ENCODE measurements at regions of chr1 and their contacts with region 1.

Region 1: DNA sequence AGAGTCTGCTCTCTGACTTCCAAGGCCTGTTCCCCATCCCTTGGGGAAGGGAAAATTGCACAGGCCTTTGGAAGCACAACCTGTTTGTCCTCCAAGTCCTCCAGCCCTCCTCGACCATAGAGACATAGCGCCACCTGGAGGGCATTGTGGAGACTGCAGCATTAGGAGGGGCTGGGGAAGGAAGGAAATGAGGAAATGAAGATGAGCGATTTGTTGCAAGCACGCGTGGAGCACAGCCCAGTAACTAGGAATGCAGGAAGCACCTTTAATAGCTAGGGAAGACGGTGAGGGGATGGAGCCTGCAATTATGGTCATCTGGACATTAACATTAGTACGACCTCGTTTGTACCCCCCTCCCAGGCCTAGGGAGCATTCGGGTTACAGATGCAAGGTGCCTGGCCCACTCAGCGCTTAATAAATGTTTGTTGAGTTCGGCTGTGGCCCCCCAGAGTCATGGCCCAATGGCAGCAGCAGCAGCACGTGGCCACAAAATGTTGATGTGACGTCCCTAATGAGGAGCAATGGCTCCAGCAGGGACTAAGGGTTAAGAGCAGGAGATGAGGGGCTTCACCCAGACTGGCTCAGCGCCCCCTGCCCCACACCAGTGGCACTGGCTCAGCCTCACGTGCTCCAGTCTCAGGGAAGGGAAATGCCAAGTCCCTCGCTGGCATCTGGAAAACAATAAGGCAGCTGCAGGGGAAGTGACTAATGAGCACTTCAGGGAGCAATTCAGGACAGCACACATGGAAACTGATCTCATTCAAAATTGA is 8.0 kb upstream of the CAMK2N1 start:
- DNase-seq: peak; percentile 98
- H3K4me3 ChIP-seq: peak overlapping the region in 1 of 3 experiments; percentile 13
- H3K27ac ChIP-seq: peak overlapping the region; percentile 90
- H3K4me1 ChIP-seq: peaks cover 23% of the 10 kb centered on the region
- H3K27me3 ChIP-seq: no peaks in the 10 kb centered on the region
- CTCF ChIP-seq: peak; percentile 89 to 96
- POLR2A ChIP-seq: no peak

Region 2: GRCh38 chr1:19762175-19762779 is 731.7 kb before region 1 on chr1:
- CTCF ChIA-PET with region 1: no interaction called
- POLR2A ChIA-PET with region 1: no interaction called
- dilution Hi-C with region 1: no loop called
- intact Hi-C with region 1: loop called (anchors 1 kb)
- DNase-seq: peak; percentile 50
- H3K4me3 ChIP-seq: no peak overlapping the region
- H3K27ac ChIP-seq: no peak overlapping the region
- H3K4me1 ChIP-seq: peaks cover 20% of the 10 kb centered on the region
- H3K27me3 ChIP-seq: no peaks in the 10 kb centered on the region
- CTCF ChIP-seq: peak; percentile 83 to 86
- POLR2A ChIP-seq: no peak

Region 3: GRCh38 chr1:19974822-19975416 is 519.1 kb before region 1 on chr1:
- CTCF ChIA-PET with region 1: interaction called, 11 read pairs
- POLR2A ChIA-PET with region 1: no interaction called
- dilution Hi-C with region 1: no loop called
- intact Hi-C with region 1: no loop called
- DNase-seq: peak; percentile 69
- H3K4me3 ChIP-seq: no peak overlapping the region
- H3K27ac ChIP-seq: no peak overlapping the region
- H3K4me1 ChIP-seq: no peaks in the 10 kb centered on the region
- H3K27me3 ChIP-seq: peaks cover 0 to 2% of the 10 kb centered on the region in 2 experiments
- CTCF ChIP-seq: peak; percentile 64 to 69
- POLR2A ChIP-seq: no peak

Region 4: GRCh38 chr1:20165522-20165951 is 328.5 kb before region 1 on chr1:
- CTCF ChIA-PET with region 1: interaction called, 6 read pairs
- POLR2A ChIA-PET with region 1: no interaction called
- dilution Hi-C with region 1: no loop called
- intact Hi-C with region 1: loop called (anchors 1 kb)
- DNase-seq: no peak
- H3K4me3 ChIP-seq: no peak overlapping the region
- H3K27ac ChIP-seq: no peak overlapping the region
- H3K4me1 ChIP-seq: no peaks in the 10 kb centered on the region
- H3K27me3 ChIP-seq: no peaks in the 10 kb centered on the region
- CTCF ChIP-seq: peak in 1 of 2 donors; percentile 11
- POLR2A ChIP-seq: no peak

Region 5: DNA sequence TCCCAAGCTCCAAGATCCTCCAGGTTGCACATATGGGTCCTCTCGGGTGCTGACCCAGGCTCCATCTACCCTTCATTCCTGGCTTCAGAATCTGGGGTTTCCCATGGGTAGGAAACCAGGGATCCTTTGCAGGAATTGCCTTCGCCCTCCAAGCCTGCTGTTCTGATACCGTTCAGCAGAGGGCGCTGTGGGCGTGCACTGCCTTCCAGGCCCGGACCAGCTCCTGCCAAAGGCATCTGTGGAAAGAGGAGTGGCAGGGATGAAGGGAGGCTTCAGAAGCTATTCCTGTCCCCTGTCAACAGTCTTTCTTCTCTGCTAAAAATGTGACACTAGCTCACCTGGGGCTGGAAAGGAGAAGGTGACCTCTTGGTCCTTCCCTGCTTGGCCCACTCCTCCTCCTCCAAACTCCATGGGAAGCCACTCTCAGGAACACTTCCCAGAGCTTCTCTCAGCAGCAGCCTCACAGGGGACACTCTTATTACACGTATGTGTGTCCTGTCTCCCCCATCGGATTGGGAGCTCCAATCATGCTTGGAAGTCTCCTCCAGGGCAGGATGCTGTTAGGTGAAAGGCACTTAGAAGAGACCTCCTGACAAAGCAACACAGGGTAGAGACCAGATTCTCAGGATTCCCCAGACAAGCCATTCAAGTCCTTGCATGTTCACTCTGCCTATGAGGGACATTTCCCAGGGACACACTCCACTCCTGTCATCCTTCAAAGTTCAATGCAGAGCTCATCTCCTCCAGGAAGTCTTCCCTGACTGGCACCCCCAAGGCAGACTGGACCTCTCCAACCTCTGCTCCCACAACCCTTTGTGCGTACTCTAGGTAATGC is 132.0 kb before region 1 on chr1:
- CTCF ChIA-PET with region 1: interaction called, 81 read pairs
- POLR2A ChIA-PET with region 1: no interaction called
- dilution Hi-C with region 1: no loop called
- intact Hi-C with region 1: loop called (anchors 1 kb)
- DNase-seq: peak; percentile 45
- H3K4me3 ChIP-seq: no peak overlapping the region
- H3K27ac ChIP-seq: no peak overlapping the region
- H3K4me1 ChIP-seq: no peaks in the 10 kb centered on the region
- H3K27me3 ChIP-seq: peaks cover 20 to 21% of the 10 kb centered on the region in 2 experiments
- CTCF ChIP-seq: peak; percentile 76 to 81
- POLR2A ChIP-seq: no peak

Region 6: GRCh38 chr1:20416706-20417105 is 77.3 kb before region 1 on chr1:
- CTCF ChIA-PET with region 1: no interaction called
- POLR2A ChIA-PET with region 1: no interaction called
- dilution Hi-C with region 1: no loop called
- intact Hi-C with region 1: no loop called
- DNase-seq: no peak
- H3K4me3 ChIP-seq: no peak overlapping the region
- H3K27ac ChIP-seq: no peak overlapping the region
- H3K4me1 ChIP-seq: no peaks in the 10 kb centered on the region
- H3K27me3 ChIP-seq: peaks cover 4% of the 10 kb centered on the region in 2 experiments
- CTCF ChIP-seq: no peak
- POLR2A ChIP-seq: no peak

Region 7: GRCh38 chr1:20470194-20470593 is 23.8 kb before region 1 on chr1:
- CTCF ChIA-PET with region 1: interaction called, 30 read pairs
- POLR2A ChIA-PET with region 1: no interaction called
- dilution Hi-C with region 1: no loop called
- intact Hi-C with region 1: loop called (anchors 1 kb)
- DNase-seq: peak; percentile 34
- H3K4me3 ChIP-seq: no peak overlapping the region
- H3K27ac ChIP-seq: no peak overlapping the region
- H3K4me1 ChIP-seq: no peaks in the 10 kb centered on the region
- H3K27me3 ChIP-seq: peaks cover 0 to 2% of the 10 kb centered on the region in 2 experiments
- CTCF ChIP-seq: no peak
- POLR2A ChIP-seq: no peak